Vagina (tissue), 2 donors: ENCODE measurements at regions of chr7 and their contacts with region 1.

Region 1: GRCh38 chr7:30212701-30213111 is 71.7 kb upstream of the ZNRF2 start:
- DNase-seq: peak in 1 of 2 donors; percentile 12
- H3K4me3 ChIP-seq: no peak overlapping the region
- H3K27ac ChIP-seq: no peak overlapping the region
- H3K4me1 ChIP-seq: no peaks in the 10 kb centered on the region
- H3K27me3 ChIP-seq: no peaks in the 10 kb centered on the region
- CTCF ChIP-seq: no peak
- POLR2A ChIP-seq: no peak

Region 2: DNA sequence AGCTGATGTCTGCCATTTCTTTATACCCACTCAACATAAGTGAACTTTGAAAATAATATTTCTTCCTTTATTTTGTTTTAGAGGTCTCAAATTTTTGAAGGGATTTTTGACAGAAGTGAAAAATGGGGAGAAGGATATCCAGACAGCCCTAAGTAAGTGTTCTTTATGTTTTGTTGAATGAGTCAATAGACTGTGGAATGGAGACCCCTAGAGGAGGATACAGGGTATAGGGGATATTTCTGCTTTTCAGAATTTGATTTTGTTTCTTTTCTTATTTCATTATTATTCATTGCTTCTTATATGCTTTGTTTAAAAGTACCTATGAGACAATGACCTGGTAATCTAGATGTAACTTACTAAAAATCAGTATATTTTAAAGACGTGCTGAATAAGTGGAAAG is 150.1 kb before region 1 on chr7:
- intact Hi-C with region 1: no loop called
- DNase-seq: no peak
- H3K4me3 ChIP-seq: no peak overlapping the region
- H3K27ac ChIP-seq: no peak overlapping the region
- H3K4me1 ChIP-seq: no peaks in the 10 kb centered on the region
- H3K27me3 ChIP-seq: no peaks in the 10 kb centered on the region
- CTCF ChIP-seq: peak; percentile 19 to 56 (median 41)
- POLR2A ChIP-seq: no peak

Region 3: DNA sequence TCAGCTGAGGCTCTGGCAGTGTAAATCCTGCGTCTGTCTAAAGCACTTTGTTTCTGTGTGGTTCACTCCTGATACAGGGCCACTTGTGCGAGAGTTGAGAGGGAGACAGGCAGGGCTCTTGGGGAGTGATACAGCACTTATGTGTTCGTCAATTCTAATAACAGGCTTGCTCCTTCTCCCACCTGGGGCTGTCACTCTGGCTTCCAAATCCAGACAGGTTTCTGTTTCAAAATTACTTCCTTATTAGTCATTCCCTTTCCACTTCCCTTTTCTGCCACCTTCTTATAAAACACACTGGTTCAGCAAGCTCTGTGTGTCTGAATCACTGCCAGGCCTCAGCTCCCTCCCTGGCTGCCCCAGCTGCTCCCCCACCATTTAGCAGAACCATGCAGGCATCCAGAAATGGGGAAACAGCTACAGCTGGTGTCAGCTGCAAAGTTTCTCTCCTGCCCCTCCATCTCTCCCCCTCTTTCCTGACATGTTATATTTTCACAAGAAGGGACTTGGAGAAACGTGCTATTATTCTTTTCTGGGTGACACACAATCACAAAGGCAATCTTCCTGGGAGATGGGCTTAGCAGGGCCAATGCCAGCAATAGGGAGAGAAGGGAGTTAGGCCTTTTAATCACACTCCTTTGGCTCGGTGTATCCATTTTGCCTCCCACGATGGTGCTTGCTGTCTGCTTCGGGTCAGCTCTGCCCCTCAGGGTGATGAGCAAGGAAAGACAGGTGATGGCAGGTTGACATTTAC is 13.3 kb after region 1 on chr7:
- intact Hi-C with region 1: no loop called
- DNase-seq: no peak
- H3K4me3 ChIP-seq: no peak overlapping the region
- H3K27ac ChIP-seq: no peak overlapping the region
- H3K4me1 ChIP-seq: peaks cover 21% of the 10 kb centered on the region
- H3K27me3 ChIP-seq: no peaks in the 10 kb centered on the region
- CTCF ChIP-seq: no peak
- POLR2A ChIP-seq: no peak

Region 4: DNA sequence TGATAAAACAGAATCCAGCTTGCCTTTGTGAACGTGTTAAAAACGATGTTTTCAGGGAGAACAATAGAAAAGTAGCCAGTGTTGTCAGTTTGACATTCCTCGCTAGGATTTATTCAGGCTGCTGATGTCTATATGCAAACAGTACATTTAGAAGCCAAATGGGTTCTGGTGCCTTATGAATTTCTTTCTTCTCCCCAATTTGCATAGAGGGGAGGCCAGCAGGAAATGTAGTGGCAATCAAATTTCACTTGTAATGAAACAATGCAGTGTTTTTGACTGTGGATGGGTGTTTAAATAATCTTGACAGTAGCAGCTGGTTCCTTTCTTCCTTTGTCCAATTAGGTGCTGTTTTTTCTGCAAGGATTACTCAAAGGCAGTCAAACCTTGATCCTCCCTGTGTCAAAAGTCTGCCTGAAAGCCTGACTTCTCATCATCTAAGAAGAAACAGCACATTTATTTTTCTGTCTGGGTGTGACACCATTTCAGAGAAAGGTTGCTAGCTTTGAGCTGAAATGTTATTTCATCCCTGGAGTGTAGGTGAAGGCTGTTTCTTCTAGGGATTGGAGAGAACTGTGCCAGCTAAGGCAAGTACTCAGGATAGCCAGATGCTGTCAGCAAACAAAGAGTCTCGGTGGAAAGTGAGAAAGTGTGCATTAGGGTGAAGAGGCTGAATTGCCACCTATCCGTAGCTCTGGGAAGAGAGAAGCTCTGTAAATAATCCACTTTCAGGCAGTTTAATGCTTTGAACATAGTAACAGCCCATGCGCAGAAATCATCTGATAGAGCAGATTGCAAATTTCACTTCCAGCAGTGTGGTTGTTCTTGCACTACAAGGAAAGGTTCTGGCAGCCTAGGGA is 35.1 kb after region 1 on chr7:
- intact Hi-C with region 1: loop called (anchors 2 kb)
- DNase-seq: no peak
- H3K4me3 ChIP-seq: no peak overlapping the region
- H3K27ac ChIP-seq: no peak overlapping the region
- H3K4me1 ChIP-seq: no peaks in the 10 kb centered on the region
- H3K27me3 ChIP-seq: no peaks in the 10 kb centered on the region
- CTCF ChIP-seq: no peak
- POLR2A ChIP-seq: no peak

Region 5: DNA sequence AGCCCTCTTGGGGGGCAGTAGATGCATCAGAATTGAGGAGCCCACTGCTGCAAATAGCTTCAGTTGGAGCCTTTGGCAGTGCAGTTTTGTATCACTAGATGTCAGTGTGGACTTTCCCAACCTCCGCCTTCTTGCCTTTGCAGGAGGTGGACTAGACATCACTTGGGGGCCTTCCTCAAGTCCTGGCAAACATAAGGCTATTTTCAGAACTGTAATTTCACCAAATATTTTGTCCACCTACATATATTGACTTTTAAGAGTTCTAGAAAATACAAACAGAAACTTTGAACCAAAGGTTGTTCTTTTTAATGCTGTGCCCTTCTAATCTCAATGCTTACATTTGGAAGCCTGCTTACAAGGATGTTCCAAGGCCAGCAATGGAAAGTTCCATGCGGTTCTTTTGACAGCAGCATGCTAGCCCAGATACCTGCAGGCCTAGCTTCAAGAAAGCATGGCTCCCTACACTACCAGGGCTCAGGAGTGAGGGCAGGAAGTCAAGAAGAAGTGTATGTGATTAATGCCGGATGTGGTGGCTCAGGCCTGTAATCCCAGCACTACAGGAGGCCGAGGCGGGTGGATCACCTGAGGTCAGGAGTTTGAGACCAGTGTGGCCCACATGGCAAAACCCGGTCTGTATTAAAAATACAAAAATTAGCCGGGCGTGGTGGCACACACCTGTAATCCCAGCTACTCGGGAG is 63.6 kb after region 1 on chr7:
- intact Hi-C with region 1: no loop called
- DNase-seq: no peak
- H3K4me3 ChIP-seq: no peak overlapping the region
- H3K27ac ChIP-seq: no peak overlapping the region
- H3K4me1 ChIP-seq: no peaks in the 10 kb centered on the region
- H3K27me3 ChIP-seq: no peaks in the 10 kb centered on the region
- CTCF ChIP-seq: peak in 2 of 3 experiments; percentile 26 to 41
- POLR2A ChIP-seq: no peak